ENCODE measurements at regions of chr13 and their contacts with region 1.

Region 1: GRCh38 chr13:110819203-110820014 is 95.5 kb downstream of the ANKRD10 start:
- DNase-seq: peak; percentile 91

Region 2: GRCh38 chr13:110593430-110594130 is 225.8 kb before region 1 on chr13:
- intact Hi-C with region 1: loop called (anchors 5 kb)
- DNase-seq: no peak

Region 3: GRCh38 chr13:110683203-110683883 is 136.1 kb before region 1 on chr13:
- intact Hi-C with region 1: loop called (anchors 2 kb)
- DNase-seq: no peak